ENCODE measurements at regions of chr2 and their contacts with region 1.

Region 1: GRCh38 chr2:68196120-68196716 is 38.5 kb downstream of the PNO1 start:
- DNase-seq: peak; percentile 58
- ATAC-seq: no peak
- H3K4me3 Mint-ChIP-seq: no peak overlapping the region
- H3K27ac Mint-ChIP-seq: no peak overlapping the region
- H3K4me1 Mint-ChIP-seq: peaks cover 61% of the 10 kb centered on the region
- H3K27me3 Mint-ChIP-seq: no peaks in the 10 kb centered on the region
- CTCF ChIP-seq: peak; percentile 74

Region 2: DNA sequence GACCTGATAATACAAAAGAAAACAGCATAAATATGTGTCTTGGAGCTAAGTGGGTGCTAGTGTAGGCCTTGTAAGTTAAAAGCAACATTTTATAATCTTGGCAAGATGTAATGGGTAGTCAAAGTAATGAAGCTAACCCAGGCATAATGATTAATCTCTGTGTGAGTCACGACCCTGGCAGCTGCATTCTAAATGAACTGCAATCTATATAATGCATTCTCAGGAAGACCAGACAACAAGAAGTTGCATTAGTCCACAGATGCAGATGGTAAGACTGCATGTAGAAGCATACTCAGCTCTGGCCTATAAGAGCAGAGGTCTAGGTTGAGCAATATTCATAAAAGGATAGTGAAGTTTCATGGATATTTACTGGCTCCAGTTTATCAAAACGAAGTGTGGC is 884.7 kb before region 1 on chr2:
- CTCF ChIA-PET with region 1: no interaction called
- POLR2A ChIA-PET with region 1: no interaction called
- intact Hi-C with region 1: no loop called
- DNase-seq: no peak
- ATAC-seq: no peak
- H3K4me3 Mint-ChIP-seq: no peak overlapping the region
- H3K27ac Mint-ChIP-seq: no peak overlapping the region
- H3K4me1 Mint-ChIP-seq: no peaks in the 10 kb centered on the region
- H3K27me3 Mint-ChIP-seq: peaks cover 9% of the 10 kb centered on the region
- CTCF ChIP-seq: no peak

Region 3: GRCh38 chr2:68074050-68074449 is 122.2 kb before region 1 on chr2:
- CTCF ChIA-PET with region 1: no interaction called
- POLR2A ChIA-PET with region 1: no interaction called
- intact Hi-C with region 1: no loop called
- DNase-seq: no peak
- ATAC-seq: no peak
- H3K4me3 Mint-ChIP-seq: no peak overlapping the region
- H3K27ac Mint-ChIP-seq: no peak overlapping the region
- H3K4me1 Mint-ChIP-seq: no peaks in the 10 kb centered on the region
- H3K27me3 Mint-ChIP-seq: peaks cover under 1% of the 10 kb centered on the region
- CTCF ChIP-seq: no peak

Region 4: DNA sequence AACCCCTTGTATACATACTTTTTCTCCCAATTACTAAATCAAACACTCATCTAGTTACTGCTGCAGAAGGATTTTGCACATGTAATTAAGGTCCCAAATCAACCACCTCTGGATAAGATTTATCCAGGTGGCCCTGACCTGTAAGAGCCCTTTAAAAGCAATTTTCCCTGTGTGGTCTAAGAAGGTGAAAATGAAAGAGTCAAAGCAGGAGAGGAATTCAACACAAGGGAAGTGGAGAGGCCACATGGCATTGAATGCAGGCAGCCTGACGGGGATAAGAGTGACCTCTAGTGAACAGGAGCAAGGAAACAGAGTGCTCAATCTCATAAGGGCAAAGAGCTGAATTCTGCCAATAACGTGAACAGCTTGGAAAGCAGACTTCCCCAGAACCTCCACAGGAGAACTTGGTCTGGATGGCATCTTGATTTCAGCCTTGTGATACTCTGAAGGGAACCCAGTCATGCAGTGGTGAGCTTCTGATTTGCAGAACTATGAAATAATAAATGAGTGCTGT is 29.0 kb after region 1 on chr2:
- CTCF ChIA-PET with region 1: interaction called, 11 read pairs
- POLR2A ChIA-PET with region 1: no interaction called
- intact Hi-C with region 1: no loop called
- DNase-seq: peak; percentile 13
- ATAC-seq: peak; percentile 51
- H3K4me3 Mint-ChIP-seq: no peak overlapping the region
- H3K27ac Mint-ChIP-seq: peak overlapping the region; percentile 41
- H3K4me1 Mint-ChIP-seq: peaks cover 85% of the 10 kb centered on the region
- H3K27me3 Mint-ChIP-seq: no peaks in the 10 kb centered on the region
- CTCF ChIP-seq: no peak

Region 5: DNA sequence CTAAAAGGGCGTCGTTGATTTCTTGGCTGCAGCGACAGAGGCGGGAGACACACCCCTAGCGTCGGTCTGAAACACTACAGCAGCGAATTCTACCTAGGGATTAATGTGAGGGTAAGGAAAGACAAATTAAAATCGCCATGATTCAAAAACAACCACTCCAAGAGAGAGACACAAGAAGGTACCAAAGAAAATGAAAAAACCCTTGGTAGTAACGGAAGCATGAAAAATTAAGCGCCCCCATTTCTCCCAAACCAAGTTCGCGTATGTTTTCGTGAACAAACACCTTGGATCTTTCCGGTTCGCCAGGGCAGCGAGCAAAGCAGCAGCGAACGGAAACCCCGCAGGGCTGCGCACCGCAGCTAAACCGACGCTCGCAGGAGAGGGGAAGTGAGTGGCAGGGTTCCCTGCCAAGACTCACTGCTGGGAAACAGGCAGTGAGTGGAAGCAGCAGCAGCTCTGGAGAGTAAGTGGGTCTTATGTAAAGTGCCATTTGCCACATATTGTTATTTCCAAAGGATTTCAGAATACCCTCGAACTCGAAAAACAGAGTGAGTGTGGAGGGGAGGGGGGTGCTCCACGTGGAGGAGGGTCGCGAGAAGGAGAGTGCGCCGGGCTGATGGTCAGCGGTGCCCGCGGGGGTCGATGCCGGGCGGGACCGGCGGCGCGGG is 55.1 kb after region 1 on chr2:
- CTCF ChIA-PET with region 1: interaction called, 11 read pairs
- POLR2A ChIA-PET with region 1: no interaction called
- intact Hi-C with region 1: loop called (anchors 1 kb)
- DNase-seq: peak; percentile 82
- ATAC-seq: peak; percentile 70
- H3K4me3 Mint-ChIP-seq: peak overlapping the region; percentile 87
- H3K27ac Mint-ChIP-seq: peak overlapping the region; percentile 98
- H3K4me1 Mint-ChIP-seq: peaks cover 31% of the 10 kb centered on the region
- H3K27me3 Mint-ChIP-seq: no peaks in the 10 kb centered on the region
- CTCF ChIP-seq: peak; percentile 64

Region 6: GRCh38 chr2:68423966-68424650 is 227.9 kb after region 1 on chr2:
- CTCF ChIA-PET with region 1: no interaction called
- POLR2A ChIA-PET with region 1: no interaction called
- intact Hi-C with region 1: no loop called
- DNase-seq: peak; percentile 33
- ATAC-seq: peak; percentile 86
- H3K4me3 Mint-ChIP-seq: no peak overlapping the region
- H3K27ac Mint-ChIP-seq: no peak overlapping the region
- H3K4me1 Mint-ChIP-seq: peaks cover 19% of the 10 kb centered on the region
- H3K27me3 Mint-ChIP-seq: no peaks in the 10 kb centered on the region
- CTCF ChIP-seq: no peak